ENCODE measurements at regions of chr14 and their contacts with region 1.

Region 1: GRCh38 chr14:61493239-61493638 is 171.9 kb downstream of the PRKCH start:
- DNase-seq: no peak
- H3K4me3 ChIP-seq: no peak overlapping the region
- CTCF ChIP-seq: no peak
- POLR2A ChIP-seq: no peak

Region 2: GRCh38 chr14:61694830-61695694 is 201.8 kb after region 1 on chr14 and contains the start of gene HIF1A:
- intact Hi-C with region 1: loop called (anchors 10 kb)
- DNase-seq: peak; percentile 96 to 99
- H3K4me3 ChIP-seq: peak within 1 kb of the TSS; percentile 93
- CTCF ChIP-seq: no peak
- POLR2A ChIP-seq: peak in 1 of 2 donors; percentile 86
- total RNA-seq, gene HIF1A: 48.8 to 88.8 (median 57.4) TPM